Activated naive CD4-positive, alpha-beta T cell treated with anti-CD3 and anti-CD28 coated beads, Interleukin-2, amount 10 ng/mL, durations not matched to agents 7 days and 5 days (primary cell): ENCODE measurements at regions of chrX and their contacts with region 1.

Region 1: GRCh38 chrX:20530406-20530921 is 263.8 kb upstream of the RPS6KA3 start:
- DNase-seq: peak; percentile 66
- H3K4me3 Mint-ChIP-seq: no peak overlapping the region
- H3K27ac Mint-ChIP-seq: no peak overlapping the region
- H3K4me1 Mint-ChIP-seq: peaks cover 6% of the 10 kb centered on the region
- H3K27me3 Mint-ChIP-seq: peaks cover 35% of the 10 kb centered on the region

Region 2: DNA sequence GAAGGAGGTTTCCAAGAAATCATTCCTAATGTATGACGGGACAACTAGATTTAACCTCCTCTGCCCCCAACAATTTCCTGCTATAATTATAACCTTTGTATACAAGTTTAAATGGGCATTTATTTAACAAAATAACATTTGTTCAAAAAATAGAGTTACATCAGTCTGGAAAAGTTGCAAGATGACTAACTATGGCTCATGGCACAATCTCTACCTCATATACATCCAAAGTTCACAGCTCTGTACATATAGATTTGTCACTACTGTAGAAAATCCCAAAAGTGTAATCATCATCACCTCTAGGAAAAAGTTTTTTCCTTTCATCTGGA is 259.9 kb before region 1 on chrX:
- CTCF ChIA-PET with region 1: no interaction called
- DNase-seq: no peak
- H3K4me3 Mint-ChIP-seq: no peak overlapping the region
- H3K27ac Mint-ChIP-seq: no peak overlapping the region
- H3K4me1 Mint-ChIP-seq: peaks cover 3% of the 10 kb centered on the region
- H3K27me3 Mint-ChIP-seq: peaks cover 20% of the 10 kb centered on the region

Region 3: GRCh38 chrX:20515841-20516461 is 14.5 kb before region 1 on chrX:
- CTCF ChIA-PET with region 1: interaction called, 20 read pairs
- DNase-seq: peak; percentile 28
- H3K4me3 Mint-ChIP-seq: no peak overlapping the region
- H3K27ac Mint-ChIP-seq: peak overlapping the region; percentile 90
- H3K4me1 Mint-ChIP-seq: peaks cover 27% of the 10 kb centered on the region
- H3K27me3 Mint-ChIP-seq: peaks cover 21% of the 10 kb centered on the region